GM10248 (cell line): ENCODE measurements at regions of chr2 and their contacts with region 1.

Region 1: GRCh38 chr2:23926750-23927571 is at the start of gene ATAD2B:
- DNase-seq: peak; percentile 93
- CTCF ChIP-seq: peak; percentile 93

Region 2: DNA sequence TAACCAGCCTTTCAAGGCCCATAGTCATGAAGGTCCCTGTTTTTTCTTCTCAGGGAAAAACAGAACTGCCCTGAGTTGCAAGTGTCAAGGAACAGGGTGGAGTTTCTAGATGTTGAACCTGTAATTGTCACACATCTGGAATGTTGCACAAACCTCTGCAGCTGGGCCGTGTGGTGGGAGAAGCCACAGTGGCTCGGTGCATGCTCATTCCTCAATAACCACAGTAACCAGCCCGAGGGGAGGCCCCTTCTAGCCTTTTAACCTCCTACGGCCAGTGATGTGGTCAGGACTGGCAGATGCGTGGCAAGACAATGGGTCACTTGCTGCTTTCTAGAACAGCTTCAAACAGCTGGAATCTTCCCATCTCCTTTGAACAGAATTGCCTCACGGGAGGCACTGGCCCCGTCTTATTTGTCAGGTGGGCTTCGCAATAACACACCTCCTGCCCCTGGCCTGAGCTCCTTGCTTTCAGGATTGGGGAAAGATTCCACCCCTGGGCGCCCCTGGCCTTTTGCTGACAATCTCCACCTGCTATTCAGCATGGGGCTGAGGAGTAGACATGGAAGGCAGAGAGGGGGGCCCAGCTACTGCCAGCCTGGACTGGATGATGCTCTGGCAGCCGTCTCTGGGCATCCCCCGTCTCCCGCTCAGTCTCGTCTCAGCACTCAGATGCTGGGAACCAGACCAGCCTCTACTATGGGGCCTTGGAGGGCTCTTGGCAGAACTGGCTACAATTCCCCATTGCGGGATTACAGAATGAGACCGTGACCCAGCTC is 439.0 kb before region 1 on chr2:
- CTCF ChIA-PET with region 1: no interaction called
- POLR2A ChIA-PET with region 1: no interaction called
- DNase-seq: peak; percentile 49
- CTCF ChIP-seq: no peak

Region 3: GRCh38 chr2:23904692-23905091 is 22.3 kb before region 1 on chr2:
- CTCF ChIA-PET with region 1: interaction called, 26 read pairs
- POLR2A ChIA-PET with region 1: interaction called, 7 read pairs
- DNase-seq: no peak
- CTCF ChIP-seq: no peak

Region 4: DNA sequence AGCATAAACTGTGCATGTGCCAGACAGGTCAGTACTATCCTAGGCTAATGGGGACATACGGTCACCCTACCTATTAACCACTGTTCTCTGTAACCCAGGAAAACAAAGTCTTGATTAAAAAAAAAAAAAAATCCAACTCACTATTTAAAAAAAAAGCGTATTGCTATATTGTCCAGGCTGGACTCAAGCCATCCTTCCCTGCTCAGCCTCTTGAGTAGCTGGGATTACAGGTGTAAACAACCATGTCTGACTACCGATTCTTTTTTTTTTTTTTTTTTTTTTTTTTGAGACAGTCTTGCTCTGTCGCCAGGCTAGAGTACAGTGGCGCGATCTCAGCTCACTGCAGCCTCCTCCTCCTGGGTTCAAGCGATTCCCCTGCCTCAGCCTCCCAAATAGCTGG is 11.6 kb before region 1 on chr2:
- CTCF ChIA-PET with region 1: interaction called, 20 read pairs
- POLR2A ChIA-PET with region 1: interaction called, 3 read pairs
- DNase-seq: no peak
- CTCF ChIP-seq: no peak

Region 5: GRCh38 chr2:23939987-23940717 is 13.2 kb after region 1 on chr2 and contains the start of gene UBXN2A:
- CTCF ChIA-PET with region 1: interaction called, 31 read pairs
- POLR2A ChIA-PET with region 1: interaction called, 37 read pairs
- DNase-seq: peak; percentile 89
- CTCF ChIP-seq: no peak

Region 6: GRCh38 chr2:24058564-24059271 is 131.8 kb after region 1 on chr2:
- CTCF ChIA-PET with region 1: interaction called, 25 read pairs
- POLR2A ChIA-PET with region 1: interaction called, 3 read pairs
- DNase-seq: no peak
- CTCF ChIP-seq: no peak

Region 7: GRCh38 chr2:24075915-24076848 is 149.2 kb after region 1 on chr2 and contains the start of gene SF3B6:
- CTCF ChIA-PET with region 1: interaction called, 13 read pairs
- POLR2A ChIA-PET with region 1: interaction called, 12 read pairs
- DNase-seq: peak; percentile 95
- CTCF ChIP-seq: no peak